MCF 10A (cell line): ENCODE measurements at regions of chr10 and their contacts with region 1.

Region 1: GRCh38 chr10:73886085-73886529 is 11.8 kb upstream of the CAMK2G start:
- DNase-seq: peak; percentile 83
- H3K4me3 Mint-ChIP-seq: no peak overlapping the region
- H3K27ac Mint-ChIP-seq: peak overlapping the region; percentile 50
- H3K4me1 Mint-ChIP-seq: peaks cover 42% of the 10 kb centered on the region
- H3K27me3 Mint-ChIP-seq: no peaks in the 10 kb centered on the region
- CTCF ChIP-seq: peak; percentile 88

Region 2: GRCh38 chr10:73908853-73909538 is 22.9 kb after region 1 on chr10:
- CTCF ChIA-PET with region 1: interaction called, 16 read pairs
- POLR2A ChIA-PET with region 1: interaction called, 88 read pairs
- intact Hi-C with region 1: loop called (anchors 1 kb)
- DNase-seq: peak; percentile 97
- H3K4me3 Mint-ChIP-seq: no peak overlapping the region
- H3K27ac Mint-ChIP-seq: peak overlapping the region; percentile 70
- H3K4me1 Mint-ChIP-seq: peaks cover 62% of the 10 kb centered on the region
- H3K27me3 Mint-ChIP-seq: no peaks in the 10 kb centered on the region
- CTCF ChIP-seq: no peak

Region 3: DNA sequence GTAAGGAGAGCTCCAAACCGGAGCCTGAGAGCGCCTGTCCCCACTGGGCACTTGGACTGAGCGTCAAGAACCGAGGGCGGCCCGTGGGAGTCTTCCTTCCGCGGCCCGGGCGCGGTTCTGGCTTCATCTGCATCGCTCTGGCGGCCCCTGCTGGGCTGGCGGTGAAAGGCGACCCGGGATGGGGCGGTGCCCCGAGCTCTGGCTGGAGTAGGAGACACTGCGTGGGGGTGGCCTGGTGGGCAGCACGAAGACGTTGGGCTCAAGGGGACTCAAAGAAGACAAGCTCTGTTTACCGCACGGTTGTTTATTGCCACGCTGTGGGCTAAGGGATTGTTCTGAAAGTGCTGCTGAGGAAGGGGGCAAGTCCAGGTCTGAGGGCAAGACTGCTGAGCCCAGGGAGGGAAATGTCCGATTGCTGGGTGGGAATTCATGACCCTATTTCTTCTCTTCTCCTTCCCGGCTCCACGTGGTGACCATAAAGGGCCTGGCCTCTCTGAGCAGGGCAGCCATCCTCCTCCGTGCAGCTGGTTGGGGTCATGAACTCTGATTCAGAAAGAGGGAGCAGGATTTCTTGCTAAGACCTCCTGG is 54.6 kb after region 1 on chr10:
- CTCF ChIA-PET with region 1: interaction called, 658 read pairs
- POLR2A ChIA-PET with region 1: interaction called, 361 read pairs
- intact Hi-C with region 1: loop called (anchors 1 kb)
- DNase-seq: peak; percentile 74
- H3K4me3 Mint-ChIP-seq: no peak overlapping the region
- H3K27ac Mint-ChIP-seq: peak overlapping the region; percentile 72
- H3K4me1 Mint-ChIP-seq: peaks cover 31% of the 10 kb centered on the region
- H3K27me3 Mint-ChIP-seq: no peaks in the 10 kb centered on the region
- CTCF ChIP-seq: peak; percentile 95

Region 4: GRCh38 chr10:73997787-73998622 is 111.9 kb after region 1 on chr10 and contains the start of gene VCL:
- CTCF ChIA-PET with region 1: interaction called, 11 read pairs
- POLR2A ChIA-PET with region 1: interaction called, 46 read pairs
- intact Hi-C with region 1: loop called (anchors 2 kb)
- DNase-seq: peak; percentile 98
- H3K4me3 Mint-ChIP-seq: peak within 1 kb of the TSS; percentile 88
- H3K27ac Mint-ChIP-seq: peak within 1 kb of the TSS; percentile 95
- H3K4me1 Mint-ChIP-seq: peaks cover 25% of the 10 kb centered on the region
- H3K27me3 Mint-ChIP-seq: no peaks in the 10 kb centered on the region
- CTCF ChIP-seq: no peak
- total RNA-seq, gene VCL: 90.2 and 90.9 TPM in 2 replicates

Region 5: DNA sequence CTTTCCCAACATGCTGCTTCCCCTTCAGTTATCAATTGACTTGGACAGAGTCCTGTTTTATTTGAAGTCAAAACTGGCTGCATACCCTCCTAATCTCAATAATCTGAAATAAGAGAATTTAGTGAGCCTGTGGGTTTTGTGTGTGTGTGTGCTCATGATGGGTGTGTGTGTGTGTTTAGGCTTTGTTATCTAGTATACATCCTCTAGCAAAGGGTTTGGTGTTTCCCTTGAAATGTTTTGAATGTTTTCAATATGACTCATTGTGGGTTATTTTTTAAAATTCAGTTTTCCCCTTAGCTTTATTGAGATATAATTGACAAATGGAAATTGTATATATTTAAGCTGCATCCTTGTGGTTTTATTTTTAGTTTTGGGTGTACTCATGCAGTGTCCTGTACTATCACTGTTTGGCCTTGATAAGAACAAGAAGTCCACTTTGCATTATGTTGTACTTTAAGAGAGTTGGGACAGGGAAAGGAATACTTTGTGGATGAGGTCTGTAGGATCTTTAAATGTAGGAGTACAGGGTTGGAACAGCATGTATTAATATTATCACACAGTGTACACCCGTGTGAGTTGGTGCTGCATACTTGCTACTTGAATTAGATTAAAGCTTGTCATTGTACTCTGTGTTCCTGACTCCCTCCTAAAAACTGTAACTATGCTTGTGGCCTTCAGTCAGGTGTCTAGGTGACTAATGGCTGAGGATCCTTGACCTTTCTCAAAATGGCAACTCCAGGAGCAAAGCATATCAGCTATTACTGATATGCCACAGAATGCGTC is 170.1 kb after region 1 on chr10:
- CTCF ChIA-PET with region 1: interaction called, 4 read pairs
- POLR2A ChIA-PET with region 1: interaction called, 10 read pairs
- intact Hi-C with region 1: no loop called
- DNase-seq: peak; percentile 47
- H3K4me3 Mint-ChIP-seq: no peak overlapping the region
- H3K27ac Mint-ChIP-seq: peak overlapping the region; percentile 81
- H3K4me1 Mint-ChIP-seq: peaks cover 26% of the 10 kb centered on the region
- H3K27me3 Mint-ChIP-seq: no peaks in the 10 kb centered on the region
- CTCF ChIP-seq: no peak